ENCODE measurements at regions of chr7 and their contacts with region 1.

Region 1: GRCh38 chr7:33807779-33808482 is 97.4 kb upstream of the BMPER start:
- DNase-seq: peak; percentile 53 to 63
- H3K4me3 ChIP-seq: no peak overlapping the region
- H3K4me3 Mint-ChIP-seq: no peak overlapping the region
- H3K27ac Mint-ChIP-seq: no peak overlapping the region
- H3K4me1 ChIP-seq: peaks cover 13% of the 10 kb centered on the region; the same call in 1 of the 2 replicates
- H3K4me1 Mint-ChIP-seq: no peaks in the 10 kb centered on the region
- H3K27me3 ChIP-seq: no peaks in the 10 kb centered on the region
- H3K27me3 Mint-ChIP-seq: peaks cover 2% of the 10 kb centered on the region
- CTCF ChIP-seq: peak; percentile 39 to 46

Region 2: DNA sequence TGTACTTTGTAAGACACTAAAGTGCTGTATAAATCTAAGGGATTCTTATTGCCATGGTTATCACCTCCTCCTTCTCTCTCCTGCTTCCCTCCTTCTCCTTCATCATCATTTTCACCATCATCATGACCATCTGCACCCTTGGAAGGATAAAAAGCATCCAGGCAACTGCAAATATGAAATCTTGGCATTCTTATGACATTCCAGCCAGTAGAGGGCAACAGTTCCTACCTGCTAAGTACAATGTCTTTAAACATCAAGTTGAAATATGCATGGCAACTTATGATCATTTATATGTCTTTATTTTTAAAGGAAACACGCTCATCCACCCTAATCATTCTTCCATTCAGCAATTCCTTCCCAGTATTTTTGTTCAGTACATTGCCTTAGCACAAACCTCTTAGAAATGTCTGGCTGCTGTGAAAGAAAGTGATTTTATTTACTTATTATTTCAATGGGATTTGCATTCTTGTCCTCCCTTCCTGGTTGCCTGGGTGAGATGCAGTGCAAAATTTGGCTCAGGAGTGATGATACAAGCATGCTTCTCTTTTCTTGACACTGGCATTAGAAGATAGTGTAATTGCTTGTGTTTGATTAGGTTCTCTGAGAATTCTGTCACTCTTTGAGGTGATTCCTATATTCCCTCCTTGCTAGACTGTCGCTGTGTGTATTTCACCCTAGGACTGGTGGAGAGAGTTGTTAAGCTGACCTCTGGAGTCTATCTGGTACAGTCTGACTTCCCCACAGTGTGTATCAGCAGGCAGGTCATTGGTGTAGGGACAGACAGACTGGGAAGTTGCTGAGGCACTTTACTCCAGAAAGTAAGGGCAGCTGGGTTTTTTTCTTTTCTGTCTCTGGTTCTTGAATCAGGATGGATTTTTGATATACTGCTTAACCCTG is 91.1 kb before region 1 on chr7:
- CTCF ChIA-PET with region 1: no interaction called
- POLR2A ChIA-PET with region 1: no interaction called
- intact Hi-C with region 1: loop called (anchors 5 kb)
- DNase-seq: peak in 1 of 2 experiments; percentile 49
- H3K4me3 ChIP-seq: no peak overlapping the region
- H3K4me3 Mint-ChIP-seq: no peak overlapping the region
- H3K27ac Mint-ChIP-seq: no peak overlapping the region
- H3K4me1 ChIP-seq: peaks cover 10% of the 10 kb centered on the region
- H3K4me1 Mint-ChIP-seq: no peaks in the 10 kb centered on the region
- H3K27me3 ChIP-seq: no peaks in the 10 kb centered on the region
- H3K27me3 Mint-ChIP-seq: peaks cover 10% of the 10 kb centered on the region
- CTCF ChIP-seq: peak; percentile 74 to 79

Region 3: GRCh38 chr7:33757562-33758165 is 50.3 kb before region 1 on chr7:
- CTCF ChIA-PET with region 1: no interaction called
- POLR2A ChIA-PET with region 1: no interaction called
- intact Hi-C with region 1: loop called (anchors 2 kb)
- DNase-seq: peak in 1 of 2 experiments; percentile 39
- H3K4me3 ChIP-seq: no peak overlapping the region
- H3K4me3 Mint-ChIP-seq: no peak overlapping the region
- H3K27ac Mint-ChIP-seq: no peak overlapping the region
- H3K4me1 ChIP-seq: 0 out of 2 replicates have a peak, but pooled peaks cover 8% of the 10 kb centered on the region
- H3K4me1 Mint-ChIP-seq: peaks cover 8% of the 10 kb centered on the region
- H3K27me3 ChIP-seq: no peaks in the 10 kb centered on the region
- H3K27me3 Mint-ChIP-seq: peaks cover 3% of the 10 kb centered on the region
- CTCF ChIP-seq: peak; percentile 44 to 51

Region 4: DNA sequence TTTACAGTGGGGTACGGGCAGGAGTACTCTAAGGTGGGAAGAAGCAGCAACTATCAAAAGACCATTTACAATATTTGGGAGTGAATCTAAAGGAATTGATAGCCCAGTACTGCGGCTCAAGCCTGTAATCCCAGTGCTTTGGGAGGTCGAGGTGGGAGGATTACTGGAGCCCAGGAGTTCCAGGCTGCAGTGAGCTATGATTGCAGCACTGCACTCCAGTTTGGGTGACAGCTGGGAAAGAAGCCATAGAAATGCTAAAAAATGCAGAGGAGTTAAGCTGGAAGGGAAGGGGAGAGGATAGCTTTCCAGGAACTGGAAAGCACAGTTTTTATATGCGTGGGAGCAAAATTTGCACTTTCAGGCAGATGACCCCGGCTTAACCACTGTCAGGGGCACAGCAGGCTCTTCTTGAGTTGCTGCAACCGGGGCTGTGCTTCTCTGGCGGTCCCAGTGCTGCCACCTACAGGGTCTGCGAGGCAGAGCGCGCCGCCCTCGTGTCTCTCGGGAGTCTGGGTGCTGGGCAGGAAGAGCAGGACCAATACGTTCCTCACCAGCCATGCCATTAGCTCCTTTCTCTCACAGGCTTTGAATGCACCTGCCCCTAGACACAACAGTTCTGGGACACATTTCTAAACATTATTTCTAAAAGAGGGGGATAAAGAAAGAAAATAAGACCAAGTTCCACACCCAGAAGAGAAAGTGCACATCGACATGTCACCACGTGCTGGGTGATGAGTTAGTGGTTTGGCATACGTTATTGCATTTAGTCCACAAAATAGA is 87.3 kb after region 1 on chr7:
- CTCF ChIA-PET with region 1: no interaction called
- POLR2A ChIA-PET with region 1: no interaction called
- intact Hi-C with region 1: no loop called
- DNase-seq: peak; percentile 78 to 84
- H3K4me3 ChIP-seq: no peak overlapping the region
- H3K4me3 Mint-ChIP-seq: no peak overlapping the region
- H3K27ac Mint-ChIP-seq: no peak overlapping the region
- H3K4me1 ChIP-seq: no peaks in the 10 kb centered on the region
- H3K4me1 Mint-ChIP-seq: peaks cover 6% of the 10 kb centered on the region
- H3K27me3 ChIP-seq: no peaks in the 10 kb centered on the region
- H3K27me3 Mint-ChIP-seq: peaks cover 8% of the 10 kb centered on the region
- CTCF ChIP-seq: peak; percentile 86 to 88

Region 5: GRCh38 chr7:33982425-33982786 is 174.5 kb after region 1 on chr7:
- CTCF ChIA-PET with region 1: no interaction called
- POLR2A ChIA-PET with region 1: no interaction called
- intact Hi-C with region 1: no loop called
- DNase-seq: no peak
- H3K4me3 ChIP-seq: no peak overlapping the region
- H3K4me3 Mint-ChIP-seq: no peak overlapping the region
- H3K27ac Mint-ChIP-seq: no peak overlapping the region
- H3K4me1 ChIP-seq: peaks cover 18% of the 10 kb centered on the region; the same call in 1 of the 2 replicates
- H3K4me1 Mint-ChIP-seq: peaks cover 12% of the 10 kb centered on the region
- H3K27me3 ChIP-seq: no peaks in the 10 kb centered on the region
- H3K27me3 Mint-ChIP-seq: no peaks in the 10 kb centered on the region
- CTCF ChIP-seq: peak in 1 of 2 experiments; percentile 22

Measured in Caco-2 (cell line).